HEK293 (cell line): ENCODE measurements at regions of chr7 and their contacts with region 1.

Region 1: DNA sequence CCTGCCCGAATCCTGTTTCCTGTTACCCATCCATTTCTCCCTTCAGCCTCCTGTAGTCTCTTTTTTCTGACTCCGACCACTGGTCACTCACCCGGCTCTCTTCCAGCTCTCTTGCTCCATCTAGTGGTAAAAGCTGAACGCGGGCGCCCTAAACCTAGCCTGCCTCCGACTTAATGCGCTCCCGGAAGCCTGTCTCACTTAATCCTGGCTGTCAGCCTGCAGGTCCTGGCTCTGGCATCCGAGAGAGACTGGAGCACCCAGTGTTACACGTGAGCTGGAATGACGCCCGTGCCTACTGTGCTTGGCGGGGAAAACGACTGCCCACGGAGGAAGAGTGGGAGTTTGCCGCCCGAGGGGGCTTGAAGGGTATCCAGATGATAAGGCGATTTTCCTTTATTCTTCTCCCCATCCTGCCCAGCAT is 10.3 kb downstream of the SUMF2 start:
- H3K4me3 ChIP-seq: no peak overlapping the region
- H3K27ac ChIP-seq: no peak overlapping the region
- H3K4me1 ChIP-seq: no peaks in the 10 kb centered on the region
- CTCF ChIP-seq: peak; percentile 72

Region 2: DNA sequence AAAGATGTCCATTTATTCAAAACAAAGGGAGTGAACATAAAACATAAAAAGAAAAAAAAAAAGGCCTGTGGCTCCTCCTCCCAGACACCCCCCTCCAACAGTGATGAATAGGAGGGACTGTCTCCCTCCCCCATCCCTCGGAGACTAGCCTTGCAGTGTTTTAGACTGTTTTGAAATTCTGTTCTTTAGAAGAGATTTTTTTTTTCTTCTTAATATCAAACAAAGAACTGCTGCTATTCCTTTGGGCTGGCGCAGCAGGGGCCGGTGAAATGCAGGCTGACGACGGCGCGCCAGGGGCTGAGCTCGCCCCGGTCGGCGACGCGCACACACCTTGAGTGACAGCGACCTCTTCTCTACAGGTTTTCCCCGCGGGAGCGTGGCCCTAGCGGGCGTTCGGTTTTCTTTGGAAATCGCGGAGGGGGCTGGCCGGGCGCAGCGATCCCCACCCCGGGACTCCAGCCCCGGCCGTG is 709.1 kb before region 1 on chr7 and contains the start of gene LANCL2:
- CTCF ChIA-PET with region 1: no interaction called
- POLR2A ChIA-PET with region 1: no interaction called
- H3K4me3 ChIP-seq: peak within 1 kb of the TSS; percentile 91
- H3K27ac ChIP-seq: peak within 1 kb of the TSS; percentile 93
- H3K4me1 ChIP-seq: peaks cover 2% of the 10 kb centered on the region; the same call in 1 of the 2 replicates
- CTCF ChIP-seq: no peak

Region 3: DNA sequence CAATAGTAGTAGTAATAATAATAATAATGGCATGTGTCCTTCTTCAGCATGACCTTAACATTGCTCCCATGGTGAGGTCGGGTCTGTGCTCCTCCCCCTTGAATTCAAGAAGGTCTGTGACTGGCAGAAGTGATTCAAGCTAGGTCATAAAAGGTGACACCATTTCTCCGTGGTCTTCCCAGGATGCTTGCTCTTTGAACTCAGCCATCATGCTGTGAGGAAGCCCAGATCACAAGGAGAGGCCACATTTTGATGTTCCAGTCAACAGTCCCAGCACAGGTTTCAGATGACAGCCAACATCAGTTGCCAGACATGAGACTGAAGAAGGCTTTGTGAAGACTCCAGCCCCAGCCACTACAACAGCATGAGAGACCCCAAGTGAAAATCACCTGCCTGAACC is 295.8 kb before region 1 on chr7:
- CTCF ChIA-PET with region 1: no interaction called
- POLR2A ChIA-PET with region 1: no interaction called
- H3K4me3 ChIP-seq: no peak overlapping the region
- H3K27ac ChIP-seq: no peak overlapping the region
- H3K4me1 ChIP-seq: no peaks in the 10 kb centered on the region
- CTCF ChIP-seq: no peak

Region 4: DNA sequence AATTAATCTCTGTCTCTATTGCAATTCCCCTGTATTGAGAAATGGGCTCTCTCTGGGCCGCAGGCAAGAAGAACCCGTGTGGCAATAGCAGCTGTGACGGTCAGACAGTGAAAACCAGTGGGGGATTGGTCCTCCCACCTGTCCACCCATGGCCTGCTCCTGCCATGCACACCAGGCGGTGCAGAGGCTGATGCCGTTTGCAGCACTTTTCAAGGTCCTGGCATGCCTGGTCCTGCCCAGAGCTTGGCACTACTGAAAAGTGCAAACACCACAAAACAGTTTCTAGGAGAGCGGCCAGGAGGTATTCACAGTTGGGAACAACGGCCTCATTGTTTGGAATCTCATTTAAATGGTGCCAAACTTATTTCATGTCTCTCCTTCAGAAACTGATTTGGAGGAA is 64.7 kb before region 1 on chr7:
- CTCF ChIA-PET with region 1: interaction called, 15 read pairs
- POLR2A ChIA-PET with region 1: interaction called, 3 read pairs
- H3K4me3 ChIP-seq: no peak overlapping the region
- H3K27ac ChIP-seq: no peak overlapping the region
- H3K4me1 ChIP-seq: no peaks in the 10 kb centered on the region
- CTCF ChIP-seq: no peak

Region 5: GRCh38 chr7:56063882-56064625 is 10.3 kb before region 1 on chr7 and contains the start of gene SUMF2:
- CTCF ChIA-PET with region 1: interaction called, 4 read pairs
- POLR2A ChIA-PET with region 1: interaction called, 17 read pairs
- H3K4me3 ChIP-seq: peak within 1 kb of the TSS; percentile 90
- H3K27ac ChIP-seq: peak within 1 kb of the TSS; percentile 76
- H3K4me1 ChIP-seq: peaks cover 11% of the 10 kb centered on the region
- CTCF ChIP-seq: peak; percentile 82